ENCODE measurements at regions of chr7 and their contacts with region 1.

Region 1: DNA sequence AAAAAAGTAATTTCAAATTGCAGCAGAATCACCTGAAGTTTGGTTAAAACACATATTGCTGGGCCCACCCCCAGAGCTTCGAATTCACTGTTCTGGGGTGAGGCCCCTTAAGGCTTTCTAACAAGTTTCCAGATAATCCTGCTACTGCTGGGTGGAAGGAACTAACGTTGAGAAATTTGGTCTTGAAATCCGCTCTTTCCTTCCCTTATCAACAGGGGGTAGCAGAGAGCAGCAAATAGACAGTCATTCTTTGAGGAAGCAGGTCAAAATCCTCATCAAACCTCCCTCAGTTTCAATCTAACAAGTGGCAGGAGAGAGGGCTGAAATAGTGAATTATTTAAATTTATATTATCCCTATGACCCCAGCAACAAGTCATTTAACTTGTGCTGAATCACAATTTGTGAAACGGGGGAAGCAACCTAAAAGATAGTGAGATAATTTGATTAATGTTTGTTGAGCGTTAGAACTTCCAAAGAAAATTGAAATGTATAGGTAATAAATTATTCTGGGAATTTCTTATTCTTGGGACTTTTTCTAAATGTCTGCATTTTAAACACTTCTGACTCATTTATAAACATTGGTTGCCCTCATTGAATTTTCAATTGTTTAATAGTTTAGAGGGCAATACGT is 21.7 kb upstream of the MALSU1 start:
- DNase-seq: no peak
- H3K4me3 ChIP-seq: no peak overlapping the region
- H3K27ac ChIP-seq: no peak overlapping the region
- H3K4me1 ChIP-seq: peaks cover 0 to 8% (median 3%) of the 10 kb centered on the region in 4 donors
- H3K27me3 ChIP-seq: no peaks in the 10 kb centered on the region
- CTCF ChIP-seq: peak; percentile 57 to 76 (median 63)
- EP300 ChIP-seq: no peak
- POLR2A ChIP-seq: no peak

Region 2: DNA sequence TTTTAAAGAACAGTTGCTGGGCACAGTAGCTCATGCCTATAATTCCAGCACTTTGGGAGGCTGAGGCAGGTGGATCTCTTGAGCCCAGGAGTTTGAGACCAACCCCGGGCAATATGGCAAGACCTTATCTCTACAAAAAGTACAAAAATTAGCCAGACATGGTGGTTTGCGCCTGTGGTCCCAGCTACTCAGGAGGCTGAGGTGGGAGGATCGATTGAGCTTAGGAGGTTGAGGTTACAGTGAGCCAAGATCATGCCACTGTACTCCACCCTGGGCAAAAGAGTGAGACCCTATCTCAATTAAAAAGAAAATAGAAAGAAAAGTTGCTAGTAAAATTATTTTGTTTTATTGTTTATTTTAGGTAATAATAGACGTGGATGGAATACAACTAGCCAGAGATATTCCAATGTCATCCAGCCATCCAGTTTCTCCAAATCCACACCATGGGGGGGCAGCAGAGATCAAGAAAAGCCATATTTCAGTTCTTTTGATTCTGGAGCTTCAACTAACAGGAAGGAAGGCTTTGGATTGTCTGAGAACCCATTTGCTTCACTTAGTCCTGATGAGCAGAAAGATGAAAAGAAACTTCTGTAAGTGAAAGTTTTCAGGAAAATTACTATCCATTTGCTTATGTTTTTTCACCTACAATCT is 92.6 kb before region 1 on chr7:
- intact Hi-C with region 1: no loop called
- DNase-seq: no peak
- H3K4me3 ChIP-seq: no peak overlapping the region
- H3K27ac ChIP-seq: no peak overlapping the region
- H3K4me1 ChIP-seq: peaks cover 19 to 39% (median 31%) of the 10 kb centered on the region in 4 donors
- H3K27me3 ChIP-seq: no peaks in the 10 kb centered on the region
- CTCF ChIP-seq: peak; percentile 32 to 42 (median 37)
- EP300 ChIP-seq: no peak
- POLR2A ChIP-seq: no peak

Region 3: DNA sequence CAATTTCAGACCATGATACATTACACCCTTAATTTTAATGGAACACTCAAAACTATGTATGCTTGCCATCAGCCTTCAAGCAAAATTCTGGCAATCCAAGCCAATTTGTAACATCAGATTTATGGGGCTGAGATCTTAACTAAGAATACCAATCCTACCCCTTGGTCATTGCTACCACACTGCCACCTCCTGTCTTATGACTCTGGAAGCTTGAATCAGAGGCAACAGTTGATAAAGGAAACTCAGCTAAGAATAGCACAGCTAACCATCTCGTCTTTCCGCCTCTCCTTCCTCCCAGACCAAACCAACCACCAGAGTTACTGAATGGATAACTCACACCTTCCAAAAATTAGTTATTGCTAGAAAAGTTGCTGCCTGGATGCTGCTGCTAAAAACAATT is 185.4 kb after region 1 on chr7:
- intact Hi-C with region 1: loop called (anchors 5 kb)
- DNase-seq: no peak
- H3K4me3 ChIP-seq: no peak overlapping the region
- H3K27ac ChIP-seq: no peak overlapping the region
- H3K4me1 ChIP-seq: peaks cover 5 to 7% (median 6%) of the 10 kb centered on the region in 4 donors
- H3K27me3 ChIP-seq: peaks cover 0 to 85% (median 29%) of the 10 kb centered on the region in 4 donors
- CTCF ChIP-seq: peak in 1 of 3 experiments; percentile 19
- EP300 ChIP-seq: no peak
- POLR2A ChIP-seq: no peak